ENCODE measurements at regions of chr19 and their contacts with region 1.

Region 1: DNA sequence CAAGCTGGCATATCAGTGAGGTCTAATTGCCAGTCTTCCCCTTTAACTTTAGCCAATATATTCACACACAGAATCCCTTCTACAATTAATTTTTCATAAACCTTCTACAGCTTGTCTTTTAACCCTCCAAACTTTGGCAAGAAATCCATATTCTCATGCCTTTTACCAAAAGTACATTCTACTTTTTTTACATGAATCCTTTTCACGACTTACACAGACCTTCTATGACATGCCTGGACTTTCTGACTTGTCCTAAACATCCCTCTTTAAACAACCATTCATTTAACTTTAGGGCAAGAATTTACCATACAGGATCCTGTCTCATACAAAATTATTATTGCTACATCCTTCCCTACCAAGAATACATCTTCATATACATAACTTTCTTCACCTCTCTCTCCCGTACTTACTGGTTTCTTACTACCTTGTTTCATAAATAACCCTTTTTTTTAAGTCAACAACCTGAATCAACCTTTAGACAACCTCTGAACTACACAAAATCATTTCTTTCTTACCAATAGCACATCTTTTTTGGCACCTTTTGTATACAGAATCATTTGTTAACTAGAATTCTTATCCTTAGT is 23.5 kb downstream of the ZNF544 start:
- DNase-seq: no peak
- ATAC-seq: no peak

Region 2: DNA sequence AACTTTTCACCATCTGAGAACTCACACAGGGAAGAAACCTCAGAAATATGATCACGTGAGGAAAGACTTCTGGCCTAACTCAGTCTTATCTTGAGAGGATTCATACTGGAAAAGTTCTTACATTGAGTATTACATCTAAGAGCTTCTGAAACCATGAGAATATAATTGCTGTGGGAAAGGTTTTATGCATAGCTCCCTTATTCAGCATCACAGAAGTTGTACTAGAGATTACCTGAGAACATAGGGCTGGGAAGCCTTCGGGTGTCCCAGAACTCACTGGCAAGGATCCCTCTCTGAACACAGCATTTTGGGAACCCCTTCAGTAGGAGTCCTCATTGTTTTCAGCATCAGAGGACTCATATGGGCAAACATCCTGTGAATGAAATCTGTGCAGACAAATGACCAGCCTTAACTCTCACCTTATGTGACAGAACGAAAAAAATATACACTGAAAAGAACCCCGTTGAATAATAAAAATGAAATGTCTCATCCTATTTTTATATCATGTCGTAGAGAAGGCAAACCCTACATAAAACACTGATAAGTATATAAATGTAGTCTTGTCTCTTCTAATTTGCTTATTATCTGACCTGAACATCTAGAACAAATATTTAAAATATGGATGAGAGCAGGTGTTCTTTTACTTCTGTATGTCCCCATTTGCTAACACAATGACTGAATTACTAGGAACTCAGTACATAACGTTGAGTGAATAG is 55.1 kb before region 1 on chr19:
- intact Hi-C with region 1: loop called (anchors 10 kb)
- DNase-seq: no peak
- ATAC-seq: no peak